T-cell (primary cell): ENCODE measurements at regions of chr9 and their contacts with region 1.

Region 1: DNA sequence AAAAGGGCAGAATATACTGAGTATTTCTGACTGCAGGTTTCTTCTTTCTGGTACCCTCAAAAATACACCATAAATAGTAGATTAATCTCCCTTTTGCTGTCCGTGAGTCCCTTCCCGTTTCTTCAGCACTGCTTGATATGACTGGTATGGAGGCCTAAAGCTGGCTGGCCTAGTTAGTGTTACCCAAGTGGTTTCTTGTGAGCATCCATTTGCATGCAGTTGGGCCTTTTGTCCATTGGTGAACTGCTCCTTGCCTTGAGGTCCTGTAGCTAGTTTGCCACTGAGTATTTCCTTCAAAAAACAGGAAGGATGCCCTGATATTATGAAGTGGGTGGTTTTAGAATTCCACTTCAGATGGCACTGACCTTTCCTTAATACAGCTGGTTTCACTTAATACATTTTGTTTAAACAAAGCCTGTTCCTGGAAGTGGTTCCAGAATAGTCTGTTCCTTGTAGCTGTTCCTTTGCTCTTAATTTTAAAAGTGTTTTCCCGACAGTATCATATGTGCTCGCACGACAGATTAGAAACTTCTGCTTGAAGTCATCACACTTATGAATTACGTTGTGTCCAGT is 40.0 kb upstream of the ABL1 start:
- DNase-seq: no peak
- ATAC-seq: no peak
- H3K4me3 ChIP-seq: no peak overlapping the region
- H3K4me3 Mint-ChIP-seq: no peak overlapping the region
- H3K27ac ChIP-seq: no peak overlapping the region
- H3K27ac Mint-ChIP-seq: no peak overlapping the region
- H3K4me1 ChIP-seq: no peaks in the 10 kb centered on the region
- H3K4me1 Mint-ChIP-seq: peaks cover 2 to 20% (median 4%) of the 10 kb centered on the region in 3 donors
- H3K27me3 ChIP-seq: no peaks in the 10 kb centered on the region
- H3K27me3 Mint-ChIP-seq: no peaks in the 10 kb centered on the region

Region 2: GRCh38 chr9:130665431-130666392 is 129.3 kb before region 1 on chr9:
- CTCF ChIA-PET with region 1: interaction called in 1 of 2 experiments, 10 read pairs
- POLR2A ChIA-PET with region 1: no interaction called
- DNase-seq: no peak
- ATAC-seq: no peak
- H3K4me3 ChIP-seq: no peak overlapping the region
- H3K4me3 Mint-ChIP-seq: peak overlapping the region in 2 of 3 donors; percentile 54 to 85
- H3K27ac ChIP-seq: no peak overlapping the region
- H3K27ac Mint-ChIP-seq: peak overlapping the region in 1 of 2 donors; percentile 41
- H3K4me1 ChIP-seq: peaks cover 2 to 56% of the 10 kb centered on the region in 2 experiments
- H3K4me1 Mint-ChIP-seq: peaks cover 20 to 32% (median 31%) of the 10 kb centered on the region in 3 donors
- H3K27me3 ChIP-seq: peaks cover 13 to 87% of the 10 kb centered on the region in 2 experiments
- H3K27me3 Mint-ChIP-seq: peaks cover 35 to 71% of the 10 kb centered on the region in 2 donors

Region 3: DNA sequence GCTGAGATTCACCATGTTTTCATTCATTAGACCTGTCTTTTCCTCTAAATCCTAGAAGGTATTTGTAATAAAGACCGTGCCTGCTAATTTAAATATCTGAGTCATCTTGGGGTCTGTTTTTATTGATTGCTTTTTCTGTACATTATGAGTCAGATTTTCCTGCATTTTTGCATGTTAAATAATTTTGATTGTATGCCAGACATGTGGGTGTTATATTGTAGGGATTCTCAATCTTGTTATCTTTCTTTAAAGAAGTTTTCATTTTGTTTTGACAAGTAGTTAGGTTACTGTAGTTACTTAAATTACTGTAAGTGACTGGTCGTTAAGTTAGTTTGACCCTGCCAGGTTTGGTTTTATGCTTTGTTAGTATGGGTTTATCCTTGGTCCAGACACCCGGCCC is 66.3 kb before region 1 on chr9:
- CTCF ChIA-PET with region 1: no interaction called
- POLR2A ChIA-PET with region 1: interaction called in 1 of 2 experiments, 13 read pairs
- DNase-seq: no peak
- ATAC-seq: no peak
- H3K4me3 ChIP-seq: no peak overlapping the region
- H3K4me3 Mint-ChIP-seq: no peak overlapping the region
- H3K27ac ChIP-seq: no peak overlapping the region
- H3K27ac Mint-ChIP-seq: peak overlapping the region in 1 of 2 donors; percentile 45
- H3K4me1 ChIP-seq: peaks cover 0 to 3% of the 10 kb centered on the region in 2 experiments
- H3K4me1 Mint-ChIP-seq: peaks cover 23 to 31% (median 30%) of the 10 kb centered on the region in 3 donors
- H3K27me3 ChIP-seq: no peaks in the 10 kb centered on the region
- H3K27me3 Mint-ChIP-seq: no peaks in the 10 kb centered on the region